PC-9 (cell line): ENCODE measurements at regions of chr10 and their contacts with region 1.

Region 1: DNA sequence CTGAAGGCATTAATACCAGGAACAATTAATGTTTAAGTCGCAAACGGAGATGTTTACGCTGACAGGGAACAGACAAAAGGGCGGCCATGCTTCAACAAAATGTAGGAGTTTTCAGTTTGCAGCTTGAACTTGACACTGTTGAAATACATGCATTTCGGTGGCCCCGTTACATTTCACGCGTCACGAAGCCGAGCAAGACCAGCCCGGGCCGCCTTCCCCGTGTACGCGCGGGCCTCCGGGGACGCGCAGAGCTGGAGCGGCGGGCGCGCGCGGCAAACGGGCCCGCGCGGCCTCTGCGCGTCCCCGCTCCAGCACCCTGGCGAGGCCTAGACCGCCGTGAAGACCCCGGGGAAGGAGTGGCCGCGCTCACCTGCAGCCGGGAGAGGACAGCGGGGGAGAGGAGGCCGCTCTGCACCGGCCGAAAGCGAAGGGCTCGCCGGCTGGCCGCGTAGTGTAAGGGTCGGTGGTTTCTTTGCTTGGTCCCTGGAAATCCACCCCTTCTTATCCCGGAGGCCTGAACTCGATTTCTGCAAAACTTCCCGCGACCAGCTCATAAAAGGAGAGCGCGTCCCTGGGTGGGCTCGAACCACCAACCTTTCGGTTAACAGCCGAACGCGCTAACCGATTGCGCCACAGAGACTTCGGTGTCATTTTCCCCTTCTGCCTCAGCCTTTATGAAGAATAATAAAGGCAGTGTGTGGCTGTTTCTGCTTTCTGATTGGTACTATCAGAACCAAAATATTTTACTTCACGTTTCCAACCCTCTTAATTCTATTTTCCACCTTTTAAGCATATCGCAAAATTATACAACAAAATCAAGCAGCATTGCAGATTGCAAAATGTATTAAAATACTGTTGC is 11.4 kb upstream of the EBLN1 start:
- DNase-seq: peak; percentile 61 to 88
- H3K4me3 ChIP-seq: peak overlapping the region; percentile 82
- H3K27ac ChIP-seq: 0 out of 2 replicates have a peak overlapping the region, but pooled peaks have one; percentile 5
- H3K4me1 ChIP-seq: peaks cover 12% of the 10 kb centered on the region
- H3K27me3 ChIP-seq: no peaks in the 10 kb centered on the region
- CTCF ChIP-seq: no peak

Region 2: DNA sequence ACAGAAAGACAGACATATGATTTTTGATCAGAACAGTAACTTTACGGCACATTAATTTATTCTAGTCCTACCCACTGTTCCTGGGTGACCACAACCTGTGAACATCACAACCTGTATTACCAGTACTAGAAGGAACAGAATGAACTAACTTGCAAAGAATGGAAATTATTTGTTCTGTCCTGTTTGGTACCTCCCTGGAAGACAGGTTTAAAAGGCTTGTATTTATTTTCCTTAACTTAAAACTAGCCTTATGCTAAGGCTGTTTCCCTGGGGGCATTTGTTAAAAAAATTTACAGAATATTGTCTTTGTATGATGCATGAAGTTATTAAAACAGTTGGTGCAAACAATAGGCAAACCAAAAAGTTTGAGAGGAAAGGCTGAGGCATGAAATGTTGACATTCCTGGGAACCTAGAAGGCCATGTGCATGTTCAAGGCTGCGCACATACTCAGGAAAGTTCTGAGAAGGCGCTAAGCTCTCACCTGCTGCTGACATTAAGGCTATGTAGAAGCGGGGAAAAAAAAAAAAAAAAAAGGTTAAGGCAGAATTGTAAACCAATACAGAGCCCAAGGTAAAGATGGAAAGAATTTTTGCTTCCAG is 358.2 kb before region 1 on chr10:
- CTCF ChIA-PET with region 1: no interaction called
- POLR2A ChIA-PET with region 1: interaction called, 22 read pairs
- intact Hi-C with region 1: no loop called
- DNase-seq: no peak
- H3K4me3 ChIP-seq: no peak overlapping the region
- H3K27ac ChIP-seq: no peak overlapping the region
- H3K4me1 ChIP-seq: no peaks in the 10 kb centered on the region
- H3K27me3 ChIP-seq: no peaks in the 10 kb centered on the region
- CTCF ChIP-seq: no peak

Region 3: DNA sequence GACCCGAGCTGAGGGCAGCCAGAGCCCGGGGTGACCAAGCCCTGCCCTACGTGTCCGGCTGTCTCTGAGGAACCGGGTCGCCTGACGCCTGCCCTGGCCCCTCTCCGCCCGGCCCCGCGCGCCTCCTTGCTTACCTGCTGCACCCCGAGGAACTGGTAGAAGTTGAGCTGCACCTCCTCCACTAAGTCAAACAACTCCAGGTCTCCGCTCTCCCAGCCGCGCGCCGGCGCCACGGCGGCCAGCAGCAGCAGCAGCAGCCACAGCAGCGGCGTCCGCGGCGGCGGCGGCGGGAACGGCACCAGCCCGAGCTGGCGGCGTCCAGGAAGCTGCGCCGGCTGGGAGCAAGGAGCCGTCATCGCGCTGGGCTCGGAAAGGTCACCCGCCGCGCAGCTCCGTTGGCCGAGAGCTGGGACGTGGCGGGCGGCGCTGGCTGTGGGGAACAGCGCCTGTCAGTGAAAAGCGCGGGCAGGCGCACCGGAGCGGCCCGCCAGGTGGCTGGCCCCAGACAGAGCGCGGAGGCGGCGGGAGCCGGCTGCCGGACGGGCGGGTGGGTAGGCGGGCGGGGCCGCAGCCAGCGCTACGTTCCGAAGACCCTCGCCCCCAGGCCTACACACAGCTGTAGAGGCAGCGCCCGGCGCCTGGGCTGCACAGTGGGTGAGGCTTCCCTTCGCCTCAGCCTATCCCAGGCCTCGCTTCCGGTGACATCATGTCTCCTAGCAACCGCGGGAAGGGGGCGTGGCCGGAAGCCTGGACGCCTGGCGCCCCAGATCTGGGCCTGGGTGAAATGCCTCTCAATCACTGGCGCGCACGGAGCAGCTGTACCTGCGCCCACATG is 225.9 kb before region 1 on chr10 and contains the start of gene DNAJC1:
- CTCF ChIA-PET with region 1: no interaction called
- POLR2A ChIA-PET with region 1: interaction called, 6 read pairs
- intact Hi-C with region 1: loop called (anchors 2 kb)
- DNase-seq: peak; percentile 78 to 96
- H3K4me3 ChIP-seq: peak within 1 kb of the TSS; percentile 93
- H3K27ac ChIP-seq: peak within 1 kb of the TSS; percentile 48
- H3K4me1 ChIP-seq: peaks cover 13% of the 10 kb centered on the region
- H3K27me3 ChIP-seq: no peaks in the 10 kb centered on the region
- CTCF ChIP-seq: no peak
- total RNA-seq, gene DNAJC1: 10.8 and 19.1 TPM in 2 replicates

Region 4: DNA sequence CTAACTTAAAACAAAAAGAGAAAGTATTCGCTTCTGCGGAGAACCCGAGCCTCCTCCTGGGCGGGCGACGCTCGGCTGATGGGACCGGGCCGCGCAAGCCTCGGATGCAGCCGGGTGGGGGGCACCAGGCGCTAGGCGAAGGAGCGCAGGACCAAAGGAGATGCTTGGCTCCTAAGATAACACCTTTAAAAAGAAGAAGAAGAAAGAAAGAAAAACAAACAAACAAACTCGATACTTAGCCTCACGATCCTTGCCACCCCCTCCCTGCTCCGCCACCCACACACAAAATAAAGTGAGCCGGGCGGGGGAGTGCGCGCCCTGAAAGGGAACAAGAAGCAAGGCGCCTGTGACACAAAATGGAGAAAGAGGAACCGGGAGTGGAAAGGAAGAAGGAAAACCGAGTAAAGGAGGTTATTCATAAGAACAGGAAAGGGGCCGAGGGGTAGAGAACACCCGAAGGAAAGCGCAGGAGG is 22.6 kb after region 1 on chr10:
- CTCF ChIA-PET with region 1: no interaction called
- POLR2A ChIA-PET with region 1: no interaction called
- intact Hi-C with region 1: loop called (anchors 1 kb)
- DNase-seq: peak in 1 of 2 experiments; percentile 38
- H3K4me3 ChIP-seq: peak overlapping the region; percentile 60
- H3K27ac ChIP-seq: no peak overlapping the region
- H3K4me1 ChIP-seq: peaks cover 15% of the 10 kb centered on the region
- H3K27me3 ChIP-seq: no peaks in the 10 kb centered on the region
- CTCF ChIP-seq: no peak

Region 5: GRCh38 chr10:22316285-22317120 is 87.3 kb after region 1 on chr10 and contains the start of gene COMMD3:
- CTCF ChIA-PET with region 1: no interaction called
- POLR2A ChIA-PET with region 1: interaction called, 5 read pairs
- intact Hi-C with region 1: loop called (anchors 1 kb)
- DNase-seq: peak; percentile 55 to 77
- H3K4me3 ChIP-seq: peak within 1 kb of the TSS; percentile 67
- H3K27ac ChIP-seq: peak within 1 kb of the TSS; percentile 58
- H3K4me1 ChIP-seq: peaks cover 29% of the 10 kb centered on the region
- H3K27me3 ChIP-seq: no peaks in the 10 kb centered on the region
- CTCF ChIP-seq: no peak
- total RNA-seq, gene COMMD3: 38.1 and 43.5 TPM in 2 replicates

Region 6: GRCh38 chr10:22325272-22326144 is 96.3 kb after region 1 on chr10:
- CTCF ChIA-PET with region 1: no interaction called
- POLR2A ChIA-PET with region 1: interaction called, 4 read pairs
- intact Hi-C with region 1: loop called (anchors 1 kb)
- DNase-seq: peak; percentile 34 to 79
- H3K4me3 ChIP-seq: peak overlapping the region; percentile 79
- H3K27ac ChIP-seq: peak overlapping the region; percentile 29; the same call in 1 of the 2 replicates
- H3K4me1 ChIP-seq: peaks cover 27% of the 10 kb centered on the region
- H3K27me3 ChIP-seq: peaks cover 16% of the 10 kb centered on the region
- CTCF ChIP-seq: no peak